ENCODE measurements at regions of chr13 and their contacts with region 1.

Region 1: GRCh38 chr13:112443995-112444860 is 68.1 kb downstream of the SPACA7 start:
- DNase-seq: no peak
- ATAC-seq: no peak
- H3K4me3 ChIP-seq: no peak overlapping the region
- H3K27ac ChIP-seq: no peak overlapping the region
- H3K4me1 ChIP-seq: no peaks in the 10 kb centered on the region
- H3K27me3 ChIP-seq: peaks cover 13 to 29% (median 18%) of the 10 kb centered on the region in 3 donors
- CTCF ChIP-seq: peak; percentile 28 to 66 (median 56)
- POLR2A ChIP-seq: no peak

Region 2: GRCh38 chr13:111474136-111475002 is 969.9 kb before region 1 on chr13:
- in situ Hi-C with region 1: loop called in 2 of 4 experiments (anchors 10 to 25 kb)
- intact Hi-C with region 1: loop called (anchors 10 kb)
- DNase-seq: no peak
- ATAC-seq: peak in 1 of 2 donors; percentile 45
- H3K4me3 ChIP-seq: no peak overlapping the region
- H3K27ac ChIP-seq: no peak overlapping the region
- H3K4me1 ChIP-seq: no peaks in the 10 kb centered on the region
- H3K27me3 ChIP-seq: peaks cover 0 to 8% (median 0%) of the 10 kb centered on the region in 3 donors
- CTCF ChIP-seq: peak in 4 of 5 experiments; percentile 33 to 52 (median 36)
- POLR2A ChIP-seq: no peak

Region 3: DNA sequence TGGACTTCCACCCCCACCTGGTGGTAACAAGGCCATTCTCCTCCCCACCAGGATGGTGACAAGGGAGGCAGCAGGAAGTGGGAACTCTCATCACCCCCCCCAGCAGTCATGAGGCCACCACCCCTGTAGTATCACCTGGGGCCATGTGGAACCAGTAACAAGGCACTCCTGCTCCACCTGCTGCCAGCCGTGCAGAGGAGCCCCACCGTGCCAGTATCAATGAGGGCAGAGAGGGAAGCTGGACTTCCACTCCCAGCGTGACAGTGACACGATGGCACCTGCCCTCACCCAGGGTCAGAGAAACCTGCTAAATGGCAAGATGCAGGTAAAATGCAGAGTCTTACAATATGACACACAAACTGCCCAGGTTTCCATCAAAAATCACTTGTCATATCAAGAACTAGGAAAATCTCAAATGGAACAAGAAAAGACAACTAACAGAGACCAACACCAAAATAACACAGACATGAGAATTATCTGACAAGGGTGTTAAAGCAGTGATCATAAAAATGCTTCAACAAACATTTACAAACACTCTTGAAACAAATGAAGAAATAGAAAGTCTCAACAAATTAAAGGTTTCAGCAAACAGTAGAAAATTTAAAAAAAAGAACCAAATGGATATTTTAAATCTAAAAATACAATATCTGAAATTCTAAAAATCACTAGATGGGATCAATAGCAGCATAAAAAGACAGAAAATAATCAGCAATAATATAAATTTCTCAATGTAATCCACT is 77.2 kb before region 1 on chr13:
- in situ Hi-C with region 1: no loop called
- intact Hi-C with region 1: no loop called
- DNase-seq: no peak
- ATAC-seq: no peak
- H3K4me3 ChIP-seq: no peak overlapping the region
- H3K27ac ChIP-seq: no peak overlapping the region
- H3K4me1 ChIP-seq: no peaks in the 10 kb centered on the region
- H3K27me3 ChIP-seq: no peaks in the 10 kb centered on the region
- CTCF ChIP-seq: no peak
- POLR2A ChIP-seq: no peak

Region 4: DNA sequence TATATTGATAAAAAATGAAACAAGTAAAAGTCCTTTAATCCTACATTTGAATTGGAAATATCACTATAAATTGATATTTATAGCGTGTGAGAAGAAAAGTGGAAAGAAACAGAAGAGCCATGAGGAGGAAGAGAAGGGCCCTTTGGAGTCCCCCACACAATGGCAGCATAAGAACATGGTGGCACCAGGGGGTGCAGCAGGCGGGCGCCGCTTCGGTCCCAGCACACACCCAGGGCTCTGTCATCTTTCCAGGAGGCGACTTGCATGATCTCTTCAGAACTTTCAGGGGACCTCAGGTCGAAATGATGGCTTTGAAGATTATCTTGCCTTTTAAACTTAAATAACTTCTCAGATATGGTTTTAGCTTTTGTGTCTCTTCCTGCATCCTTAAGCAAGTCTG is 51.9 kb after region 1 on chr13:
- in situ Hi-C with region 1: no loop called
- intact Hi-C with region 1: no loop called
- DNase-seq: no peak
- ATAC-seq: no peak
- H3K4me3 ChIP-seq: no peak overlapping the region
- H3K27ac ChIP-seq: no peak overlapping the region
- H3K4me1 ChIP-seq: no peaks in the 10 kb centered on the region
- H3K27me3 ChIP-seq: no peaks in the 10 kb centered on the region
- CTCF ChIP-seq: no peak
- POLR2A ChIP-seq: no peak